Gastrocnemius medialis (tissue), 4 donors: ENCODE measurements at regions of chr3 and their contacts with region 1.

Region 1: DNA sequence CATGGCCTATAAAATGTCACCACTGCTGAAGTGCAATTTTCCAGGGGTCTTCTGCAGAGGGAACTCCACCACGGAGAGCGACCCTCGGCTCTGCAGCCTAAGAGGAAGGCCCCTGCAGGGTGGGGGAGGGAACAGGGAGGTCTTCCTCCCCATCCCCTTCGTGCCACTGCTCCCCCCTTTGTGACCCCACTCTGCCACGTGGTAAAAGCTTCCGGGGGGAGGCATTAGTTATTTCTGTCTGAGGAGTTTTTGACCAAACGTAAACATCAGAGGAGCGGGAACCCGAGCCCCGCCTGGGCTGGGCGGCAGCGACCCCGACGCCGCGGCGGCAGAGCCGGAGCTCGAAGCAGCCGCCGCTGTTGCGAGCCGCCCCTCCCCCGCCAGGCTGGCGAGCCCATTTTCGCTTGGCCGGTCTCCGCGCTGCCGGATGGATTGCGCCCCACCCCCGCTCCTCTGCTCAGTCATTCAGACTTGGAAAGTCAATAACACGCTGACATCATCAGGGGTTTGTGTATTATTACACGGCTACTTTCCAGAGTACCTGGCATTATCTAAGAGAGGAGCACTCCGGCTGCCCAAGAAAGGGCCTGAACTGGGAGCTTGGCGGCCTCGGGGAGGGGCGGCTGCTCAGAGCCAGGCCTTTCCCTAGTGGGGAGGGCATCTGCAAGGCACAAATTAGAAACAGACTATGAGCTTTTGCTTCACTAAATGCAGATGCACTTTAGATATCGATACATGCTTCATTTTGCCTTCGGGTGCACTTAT is 162.5 kb upstream of the TBL1XR1 start:
- DNase-seq: peak; percentile 91 to 94
- ATAC-seq: peak; percentile 87 to 90
- H3K4me3 ChIP-seq: peak overlapping the region; percentile 47 to 57 (median 52)
- H3K27ac ChIP-seq: peak overlapping the region; percentile 84 to 92 (median 88)
- H3K4me1 ChIP-seq: peaks cover 47 to 53% of the 10 kb centered on the region in 2 donors
- H3K27me3 ChIP-seq: no peaks in the 10 kb centered on the region
- CTCF ChIP-seq: peak in 2 of 5 experiments; percentile 24 to 43
- POLR2A ChIP-seq: peak; percentile 43 to 83

Region 2: GRCh38 chr3:176953106-176954060 is 406.4 kb before region 1 on chr3:
- in situ Hi-C with region 1: no loop called
- intact Hi-C with region 1: loop called (anchors 5 kb)
- DNase-seq: peak; percentile 87 to 93
- ATAC-seq: peak; percentile 84 to 86
- H3K4me3 ChIP-seq: no peak overlapping the region
- H3K27ac ChIP-seq: peak overlapping the region; percentile 53 to 80 (median 68)
- H3K4me1 ChIP-seq: peaks cover 42% of the 10 kb centered on the region in 2 donors
- H3K27me3 ChIP-seq: no peaks in the 10 kb centered on the region
- CTCF ChIP-seq: no peak
- POLR2A ChIP-seq: no peak

Region 3: DNA sequence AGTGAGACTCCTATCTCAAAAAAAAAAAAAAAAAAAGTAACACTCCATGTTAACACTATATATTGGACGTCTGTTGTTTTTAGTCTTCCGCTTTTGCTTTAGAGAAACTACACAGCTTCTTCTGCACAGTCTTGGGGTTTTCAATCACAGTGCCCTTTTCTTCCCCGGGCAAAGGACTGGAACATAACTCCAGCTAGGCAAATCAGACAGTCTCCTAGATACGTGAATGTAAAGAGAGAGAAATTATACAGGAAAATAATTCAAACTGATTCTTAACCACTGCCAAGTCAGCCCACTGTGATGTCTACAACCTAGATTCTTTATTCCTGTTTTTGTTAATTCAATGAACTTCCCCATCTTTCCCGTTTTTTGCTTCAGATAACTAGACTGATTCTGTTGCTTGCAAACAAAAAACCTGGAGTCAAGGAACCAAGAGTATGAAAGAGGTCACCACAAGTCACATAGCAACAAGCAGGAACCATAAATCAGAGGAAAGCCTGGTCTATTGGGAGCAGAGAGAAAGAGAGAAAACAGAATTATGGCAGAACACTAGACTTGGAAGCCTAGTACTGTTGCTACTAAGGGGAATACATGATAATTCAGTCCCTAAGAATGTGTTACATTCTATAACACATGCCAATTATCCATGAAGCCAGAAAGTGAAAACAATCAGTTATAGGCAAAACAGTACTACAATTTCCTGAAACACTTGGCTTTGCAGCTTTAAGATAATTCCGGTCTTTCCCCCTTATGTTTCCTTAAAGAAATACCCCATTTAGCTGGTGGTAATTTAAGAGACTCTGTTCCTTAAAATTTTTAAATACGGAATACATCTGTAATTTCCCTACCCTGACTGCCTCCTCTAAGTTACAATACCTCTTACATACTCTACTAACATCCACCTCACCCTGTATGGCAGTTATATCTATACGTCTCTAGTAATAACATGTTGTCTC is 225.6 kb before region 1 on chr3:
- in situ Hi-C with region 1: no loop called
- intact Hi-C with region 1: loop called (anchors 5 kb)
- DNase-seq: no peak
- ATAC-seq: peak; percentile 24 to 43
- H3K4me3 ChIP-seq: no peak overlapping the region
- H3K27ac ChIP-seq: peak overlapping the region in 1 of 4 donors; percentile 17
- H3K4me1 ChIP-seq: peaks cover 21 to 44% of the 10 kb centered on the region in 2 donors
- H3K27me3 ChIP-seq: no peaks in the 10 kb centered on the region
- CTCF ChIP-seq: no peak
- POLR2A ChIP-seq: no peak

Region 4: DNA sequence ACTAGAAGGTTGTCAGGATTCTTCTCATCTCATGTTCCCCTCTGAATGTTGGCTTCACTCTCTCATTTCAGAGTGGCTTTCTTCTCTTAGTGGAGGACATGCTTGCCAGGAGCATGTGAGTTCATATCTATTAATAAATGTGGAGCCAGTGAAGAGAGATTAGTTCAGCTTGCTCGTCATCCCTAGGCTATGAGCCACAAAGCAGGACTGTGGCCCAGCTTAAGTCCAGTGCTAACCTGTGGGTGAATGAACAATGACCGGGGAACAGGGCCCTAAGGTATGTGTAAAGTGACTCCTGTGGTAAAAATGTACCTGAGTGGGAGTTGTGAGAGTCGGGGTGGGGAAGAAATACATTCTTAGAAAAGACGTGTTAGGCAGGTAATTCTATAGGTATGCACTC is 65.6 kb before region 1 on chr3:
- in situ Hi-C with region 1: no loop called
- intact Hi-C with region 1: loop called (anchors 1 kb)
- DNase-seq: peak; percentile 82 to 85
- ATAC-seq: peak; percentile 99 to 100
- H3K4me3 ChIP-seq: no peak overlapping the region
- H3K27ac ChIP-seq: peak overlapping the region; percentile 69 to 91 (median 80)
- H3K4me1 ChIP-seq: peaks cover 22 to 31% of the 10 kb centered on the region in 2 donors
- H3K27me3 ChIP-seq: no peaks in the 10 kb centered on the region
- CTCF ChIP-seq: no peak
- POLR2A ChIP-seq: no peak

Region 5: GRCh38 chr3:177468331-177468730 is 108.6 kb after region 1 on chr3:
- in situ Hi-C with region 1: no loop called
- intact Hi-C with region 1: loop called (anchors 5 kb)
- DNase-seq: peak; percentile 33 to 40
- ATAC-seq: no peak
- H3K4me3 ChIP-seq: no peak overlapping the region
- H3K27ac ChIP-seq: no peak overlapping the region
- H3K4me1 ChIP-seq: peaks cover 4 to 44% of the 10 kb centered on the region in 2 donors
- H3K27me3 ChIP-seq: no peaks in the 10 kb centered on the region
- CTCF ChIP-seq: no peak
- POLR2A ChIP-seq: no peak

Region 6: DNA sequence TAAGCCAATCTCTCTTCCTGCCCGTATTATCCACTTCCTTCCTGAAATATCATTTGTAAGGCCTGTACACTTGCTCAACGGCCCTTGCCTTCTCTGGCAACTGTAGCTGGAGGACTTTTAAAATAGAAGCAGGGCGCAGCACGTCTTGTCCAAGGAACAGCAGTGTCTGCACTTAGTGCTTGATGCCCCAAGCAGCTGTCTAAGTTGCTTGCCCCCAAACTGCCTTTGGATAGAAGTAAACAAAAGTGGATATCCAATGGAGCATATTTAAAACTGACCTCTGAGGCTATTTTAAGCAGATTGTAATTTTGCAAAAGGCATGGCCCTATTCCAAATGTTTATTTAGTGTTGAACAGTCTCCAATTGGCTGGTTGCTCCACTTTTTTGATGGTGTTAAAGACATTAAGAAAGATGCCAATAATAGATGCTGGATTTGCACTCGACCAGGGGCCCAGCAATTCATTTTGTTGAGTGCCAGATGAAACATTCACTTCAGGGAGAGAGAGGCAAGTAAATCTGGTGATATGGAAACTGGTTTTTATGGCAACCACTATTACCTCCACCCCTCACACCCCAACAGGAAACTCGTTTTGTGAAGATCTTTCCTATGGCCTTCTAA is 364.4 kb after region 1 on chr3:
- in situ Hi-C with region 1: no loop called
- intact Hi-C with region 1: loop called (anchors 5 kb)
- DNase-seq: peak; percentile 94
- ATAC-seq: peak; percentile 93 to 97
- H3K4me3 ChIP-seq: no peak overlapping the region
- H3K27ac ChIP-seq: peak overlapping the region; percentile 84 to 87 (median 86)
- H3K4me1 ChIP-seq: peaks cover 46 to 60% of the 10 kb centered on the region in 2 donors
- H3K27me3 ChIP-seq: no peaks in the 10 kb centered on the region
- CTCF ChIP-seq: no peak
- POLR2A ChIP-seq: peak in 1 of 2 donors; percentile 59

Region 7: DNA sequence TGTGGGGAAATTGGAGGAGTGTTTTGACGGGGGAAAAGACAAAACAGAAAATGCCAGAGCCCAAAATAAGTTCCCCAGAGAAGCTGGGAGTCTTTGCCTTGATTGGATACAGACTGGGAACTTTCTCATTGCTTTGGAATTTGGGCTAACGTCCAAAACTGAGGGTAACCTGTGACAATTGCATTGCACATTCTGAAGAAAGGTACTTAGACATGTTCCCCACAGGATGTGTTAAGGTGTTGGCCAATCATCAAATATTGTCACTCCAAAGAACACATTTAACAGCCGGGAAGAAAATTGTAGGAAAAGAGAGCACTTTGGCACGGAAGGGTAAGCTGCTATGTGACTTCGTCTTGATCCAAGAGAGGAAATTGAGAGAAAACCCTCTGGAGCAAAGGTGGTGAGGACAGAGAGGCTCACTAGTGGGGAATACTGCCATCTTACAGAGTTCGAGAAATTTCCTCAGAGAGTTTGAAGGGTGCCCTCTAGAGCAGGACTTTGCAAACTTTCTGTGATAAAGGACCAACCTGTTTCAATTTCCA is 457.0 kb after region 1 on chr3:
- in situ Hi-C with region 1: no loop called
- intact Hi-C with region 1: loop called (anchors 5 kb)
- DNase-seq: no peak
- ATAC-seq: peak; percentile 57 to 83
- H3K4me3 ChIP-seq: no peak overlapping the region
- H3K27ac ChIP-seq: peak overlapping the region; percentile 18 to 64 (median 54)
- H3K4me1 ChIP-seq: peaks cover 19 to 36% of the 10 kb centered on the region in 2 donors
- H3K27me3 ChIP-seq: no peaks in the 10 kb centered on the region
- CTCF ChIP-seq: peak in 1 of 5 experiments; percentile 11
- POLR2A ChIP-seq: no peak